ENCODE measurements at regions of chr5 and their contacts with region 1.

Region 1: GRCh38 chr5:177982072-177982727 is 13.8 kb downstream of the PROP1 start:
- DNase-seq: peak in 5 of 6 donors; percentile 29 to 77 (median 56)
- ATAC-seq: peak; percentile 66 to 83 (median 74)
- H3K4me3 ChIP-seq: no peak overlapping the region
- H3K27ac ChIP-seq: no peak overlapping the region
- H3K4me1 ChIP-seq: no peaks in the 10 kb centered on the region
- H3K27me3 ChIP-seq: no peaks in the 10 kb centered on the region
- CTCF ChIP-seq: peak in 2 of 4 donors; percentile 24 to 38

Region 2: GRCh38 chr5:178063277-178063676 is 81.1 kb after region 1 on chr5:
- intact Hi-C with region 1: loop called in 2 of 3 experiments (anchors 5 to 10 kb)
- DNase-seq: no peak
- ATAC-seq: no peak
- H3K4me3 ChIP-seq: no peak overlapping the region
- H3K27ac ChIP-seq: no peak overlapping the region
- H3K4me1 ChIP-seq: peaks cover 0 to 3% (median under 1%) of the 10 kb centered on the region in 3 donors
- H3K27me3 ChIP-seq: no peaks in the 10 kb centered on the region
- CTCF ChIP-seq: no peak

Region 3: DNA sequence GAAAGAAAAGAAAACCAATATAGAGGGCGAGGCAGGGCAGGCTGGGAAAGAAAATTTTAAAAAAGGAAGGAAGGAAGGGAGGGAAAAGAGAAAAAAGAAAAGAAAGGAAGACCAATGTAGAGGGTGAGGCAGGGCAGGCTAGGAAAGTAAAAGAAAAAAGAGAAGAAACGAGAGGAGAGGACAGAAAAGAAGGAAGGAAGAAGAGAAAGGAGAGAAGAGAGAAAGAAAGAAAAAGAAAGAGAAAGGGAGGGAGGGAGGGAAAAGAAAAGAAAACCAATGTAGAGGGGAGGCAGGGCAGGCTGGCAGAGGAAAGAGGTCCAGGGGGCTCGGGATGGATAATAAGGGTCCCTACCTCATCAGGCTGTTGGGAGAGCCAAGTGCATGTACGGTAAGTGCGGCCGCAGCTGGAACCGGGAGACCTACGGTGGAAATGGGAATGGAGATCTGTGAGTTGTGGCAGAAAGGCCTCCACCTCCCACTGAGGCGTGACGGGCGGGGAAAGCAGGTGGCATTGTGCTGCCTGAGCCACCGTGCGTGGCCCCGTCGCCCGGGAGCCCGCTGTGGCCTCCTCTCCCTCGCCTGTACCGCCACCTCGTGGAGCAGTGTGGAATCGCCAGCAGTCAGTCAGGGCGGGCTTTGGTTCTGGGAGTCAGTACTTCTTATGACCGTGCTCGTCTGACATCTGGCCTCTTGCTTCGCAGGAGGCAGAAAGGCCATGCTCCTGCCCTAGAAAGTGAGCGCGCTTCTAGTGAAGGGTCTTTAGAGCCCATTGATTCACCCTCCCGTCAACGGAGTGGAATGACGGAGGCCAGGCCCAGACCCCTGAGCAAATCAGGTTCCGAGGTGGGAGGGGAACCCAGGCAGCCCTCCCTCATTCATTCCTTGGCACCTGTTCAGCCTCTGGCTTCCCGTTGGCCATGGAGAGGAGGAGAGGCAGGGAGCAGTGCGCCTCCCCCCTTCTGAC is 181.9 kb after region 1 on chr5:
- intact Hi-C with region 1: no loop called
- DNase-seq: peak; percentile 75 to 99 (median 92)
- ATAC-seq: peak; percentile 97 to 100 (median 100)
- H3K4me3 ChIP-seq: peak overlapping the region in 1 of 4 donors; percentile 17
- H3K27ac ChIP-seq: no peak overlapping the region
- H3K4me1 ChIP-seq: peaks cover 0 to 3% (median 0%) of the 10 kb centered on the region in 3 donors
- H3K27me3 ChIP-seq: no peaks in the 10 kb centered on the region
- CTCF ChIP-seq: peak; percentile 99 to 100 (median 99)

Region 4: GRCh38 chr5:178271726-178272479 is 289.7 kb after region 1 on chr5:
- intact Hi-C with region 1: no loop called
- DNase-seq: peak in 1 of 6 donors; percentile 50
- ATAC-seq: no peak
- H3K4me3 ChIP-seq: no peak overlapping the region
- H3K27ac ChIP-seq: no peak overlapping the region
- H3K4me1 ChIP-seq: no peaks in the 10 kb centered on the region
- H3K27me3 ChIP-seq: no peaks in the 10 kb centered on the region
- CTCF ChIP-seq: no peak

Region 5: GRCh38 chr5:178312880-178313282 is 330.7 kb after region 1 on chr5:
- intact Hi-C with region 1: no loop called
- DNase-seq: peak in 2 of 6 donors; percentile 16 to 21
- ATAC-seq: peak in 2 of 4 donors; percentile 50 to 64
- H3K4me3 ChIP-seq: no peak overlapping the region
- H3K27ac ChIP-seq: no peak overlapping the region
- H3K4me1 ChIP-seq: no peaks in the 10 kb centered on the region
- H3K27me3 ChIP-seq: no peaks in the 10 kb centered on the region
- CTCF ChIP-seq: no peak

Measured in pancreas (tissue), 10 donors.